PC-3 (cell line): ENCODE measurements at regions of chr7 and their contacts with region 1.

Region 1: DNA sequence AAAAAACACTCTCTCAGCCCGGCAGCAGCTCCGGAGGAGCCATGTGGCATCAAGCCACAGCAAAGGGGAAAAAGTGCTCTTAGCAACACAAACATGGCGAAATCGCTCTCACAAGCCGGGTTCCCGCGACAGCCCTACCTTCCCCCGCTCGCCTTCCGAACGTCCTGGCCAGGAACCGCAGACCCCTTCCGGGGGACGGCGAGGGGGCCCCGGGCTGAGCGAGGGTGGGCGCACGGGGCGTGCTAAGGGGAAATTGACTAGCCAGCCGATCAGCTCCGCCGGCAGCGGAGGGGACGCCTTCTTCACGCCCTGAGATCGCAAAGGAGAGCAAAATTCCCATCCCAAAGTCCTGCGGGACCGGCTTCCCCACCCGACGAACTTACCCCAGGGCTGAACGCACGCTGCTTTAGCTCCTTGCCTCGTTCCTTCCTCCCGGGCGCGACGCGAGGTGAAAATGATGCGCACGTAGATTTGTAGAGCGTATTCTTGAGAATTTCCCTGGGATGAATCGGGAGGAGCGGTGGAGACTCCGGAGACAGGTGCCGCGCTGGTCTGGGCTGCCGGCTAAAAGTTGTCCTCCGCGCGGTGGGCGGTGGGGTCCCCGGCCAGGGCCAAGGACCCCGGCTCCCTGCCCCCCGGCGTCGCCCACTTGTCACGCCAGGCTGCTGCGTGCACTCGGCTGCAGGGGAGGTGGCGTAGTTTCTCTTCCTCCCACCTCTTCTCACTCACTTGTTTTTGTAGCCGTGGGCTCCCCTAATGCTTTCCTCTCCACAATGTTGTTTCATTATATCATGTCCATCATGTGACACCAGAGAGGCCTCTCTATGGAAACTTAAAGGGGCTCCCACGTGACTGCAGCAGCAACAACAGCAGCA is 220.1 kb upstream of the MKLN1 start:
- DNase-seq: peak; percentile 64
- ATAC-seq: peak; percentile 8
- H3K4me3 ChIP-seq: peak overlapping the region; percentile 96
- H3K27ac ChIP-seq: peak overlapping the region; percentile 96
- H3K4me1 ChIP-seq: peaks cover 38% of the 10 kb centered on the region
- H3K27me3 ChIP-seq: no peaks in the 10 kb centered on the region
- CTCF ChIP-seq: no peak

Region 2: GRCh38 chr7:131071786-131072504 is 35.6 kb before region 1 on chr7:
- CTCF ChIA-PET with region 1: interaction called, 3 read pairs
- POLR2A ChIA-PET with region 1: no interaction called
- intact Hi-C with region 1: loop called (anchors 5 kb)
- DNase-seq: peak; percentile 72
- ATAC-seq: peak; percentile 57
- H3K4me3 ChIP-seq: peak overlapping the region; percentile 56
- H3K27ac ChIP-seq: peak overlapping the region; percentile 25; the same call in 1 of the 2 replicates
- H3K4me1 ChIP-seq: peaks cover 23% of the 10 kb centered on the region
- H3K27me3 ChIP-seq: no peaks in the 10 kb centered on the region
- CTCF ChIP-seq: peak; percentile 55

Region 3: DNA sequence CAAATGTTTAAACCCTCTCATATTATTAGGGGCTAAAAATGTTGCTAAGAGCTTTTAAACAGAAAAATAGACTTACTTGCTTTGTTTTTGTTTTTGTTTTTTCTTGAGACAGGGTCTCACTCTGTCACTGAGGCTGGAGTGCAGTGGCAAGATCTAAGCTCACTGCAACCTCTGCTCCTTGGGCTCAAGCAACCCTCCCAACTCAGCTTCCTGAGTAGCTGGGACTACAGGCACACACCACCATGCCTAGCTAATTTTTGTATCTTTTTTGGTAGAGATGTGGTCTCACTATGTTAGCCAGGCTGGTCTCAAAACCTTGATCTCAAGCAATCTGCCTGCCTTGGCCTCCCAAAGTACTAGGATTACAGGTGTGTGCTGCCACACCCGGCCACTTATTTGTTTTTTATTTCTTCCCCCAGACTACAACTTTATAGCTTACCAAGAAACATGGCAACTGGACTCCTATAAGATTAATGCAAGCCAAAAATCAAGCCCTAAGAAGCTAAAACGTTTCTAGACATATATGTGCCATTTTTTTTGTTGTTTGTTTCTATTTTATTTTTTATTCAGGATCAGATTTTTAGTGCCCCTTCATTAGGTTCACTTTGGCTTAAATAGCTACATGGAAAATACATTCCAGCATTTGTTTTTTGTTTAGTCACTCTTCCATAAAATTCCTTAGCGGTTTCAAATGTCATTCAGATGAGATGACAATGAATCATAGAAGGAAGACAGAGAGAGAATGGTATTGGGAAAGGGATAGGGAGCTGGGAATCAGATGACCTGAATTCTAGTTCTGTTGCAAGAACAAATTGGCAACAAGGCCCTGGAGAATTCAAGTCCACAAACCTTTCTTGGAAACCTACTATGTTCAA is 56.7 kb after region 1 on chr7:
- CTCF ChIA-PET with region 1: interaction called, 5 read pairs
- POLR2A ChIA-PET with region 1: interaction called, 18 read pairs
- intact Hi-C with region 1: loop called (anchors 2 kb)
- DNase-seq: peak; percentile 91
- ATAC-seq: peak; percentile 91
- H3K4me3 ChIP-seq: peak overlapping the region; percentile 34; the same call in 1 of the 2 replicates
- H3K27ac ChIP-seq: peak overlapping the region; percentile 84
- H3K4me1 ChIP-seq: peaks cover 37% of the 10 kb centered on the region
- H3K27me3 ChIP-seq: no peaks in the 10 kb centered on the region
- CTCF ChIP-seq: no peak

Region 4: GRCh38 chr7:131244259-131244852 is 136.8 kb after region 1 on chr7:
- CTCF ChIA-PET with region 1: no interaction called
- POLR2A ChIA-PET with region 1: no interaction called
- intact Hi-C with region 1: loop called (anchors 5 kb)
- DNase-seq: peak; percentile 84
- ATAC-seq: peak; percentile 99
- H3K4me3 ChIP-seq: no peak overlapping the region
- H3K27ac ChIP-seq: no peak overlapping the region
- H3K4me1 ChIP-seq: peaks cover 10% of the 10 kb centered on the region; the same call in 1 of the 2 replicates
- H3K27me3 ChIP-seq: no peaks in the 10 kb centered on the region
- CTCF ChIP-seq: no peak

Region 5: GRCh38 chr7:131327626-131328376 is 220.2 kb after region 1 on chr7 and contains the start of gene MKLN1:
- CTCF ChIA-PET with region 1: no interaction called
- POLR2A ChIA-PET with region 1: no interaction called
- intact Hi-C with region 1: loop called (anchors 2 kb)
- DNase-seq: peak; percentile 85
- ATAC-seq: peak; percentile 88
- H3K4me3 ChIP-seq: peak within 1 kb of the TSS; percentile 88
- H3K27ac ChIP-seq: peak within 1 kb of the TSS; percentile 66
- H3K4me1 ChIP-seq: peaks cover 30% of the 10 kb centered on the region
- H3K27me3 ChIP-seq: no peaks in the 10 kb centered on the region
- CTCF ChIP-seq: no peak
- total RNA-seq, gene MKLN1: 15.3 and 16.3 TPM in 2 replicates